B cell (primary cell): ENCODE measurements at regions of chr18 and their contacts with region 1.

Region 1: DNA sequence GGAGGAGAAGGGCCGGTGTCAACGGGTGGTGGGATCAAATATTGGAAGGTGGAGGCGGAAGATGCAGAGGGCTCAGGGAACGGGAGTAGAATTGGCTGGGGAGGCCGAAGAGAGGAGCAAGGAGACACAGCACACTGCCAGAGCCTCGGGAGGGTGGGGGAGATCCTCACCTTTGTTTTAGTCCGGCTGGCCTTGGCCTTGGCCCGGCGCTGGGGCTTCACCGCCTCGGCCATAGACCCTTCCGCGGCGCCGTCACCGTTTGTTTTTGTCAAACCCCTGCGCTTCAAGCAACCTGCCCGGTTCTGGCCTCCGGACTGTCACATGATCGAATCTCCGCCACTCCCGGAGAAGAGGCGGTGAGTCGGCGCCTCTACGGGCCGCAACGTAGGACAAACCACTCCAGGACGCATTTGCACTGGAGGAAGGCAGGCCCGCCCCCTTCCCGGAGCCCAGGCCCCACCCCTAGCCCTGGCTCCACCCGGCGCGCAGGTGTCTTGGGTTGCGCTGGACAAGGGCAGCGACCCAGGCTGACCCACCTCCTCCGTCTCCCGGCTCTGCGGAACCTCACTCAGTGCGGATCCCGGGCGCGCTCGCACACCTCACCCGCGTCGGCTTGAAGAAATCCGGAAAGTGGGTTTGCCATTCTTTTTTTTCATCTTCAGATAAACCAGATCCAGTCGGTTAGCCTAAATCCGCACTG is at the start of gene EPG5:
- DNase-seq: peak; percentile 94
- ATAC-seq: peak; percentile 99
- H3K4me3 ChIP-seq: peak within 1 kb of the TSS; percentile 76 to 90 (median 87)
- H3K4me3 Mint-ChIP-seq: peak within 1 kb of the TSS; percentile 99
- H3K27ac ChIP-seq: peak within 1 kb of the TSS; percentile 62 to 74
- H3K27ac Mint-ChIP-seq: peak within 1 kb of the TSS; percentile 94
- H3K4me1 ChIP-seq: peaks cover 0 to 9% of the 10 kb centered on the region in 2 donors
- H3K4me1 Mint-ChIP-seq: peaks cover 35% of the 10 kb centered on the region
- H3K27me3 ChIP-seq: no peaks in the 10 kb centered on the region
- H3K27me3 Mint-ChIP-seq: no peaks in the 10 kb centered on the region
- CTCF ChIP-seq: no peak
- total RNA-seq, gene EPG5: 46.8 and 50.4 TPM in 2 replicates

Region 2: DNA sequence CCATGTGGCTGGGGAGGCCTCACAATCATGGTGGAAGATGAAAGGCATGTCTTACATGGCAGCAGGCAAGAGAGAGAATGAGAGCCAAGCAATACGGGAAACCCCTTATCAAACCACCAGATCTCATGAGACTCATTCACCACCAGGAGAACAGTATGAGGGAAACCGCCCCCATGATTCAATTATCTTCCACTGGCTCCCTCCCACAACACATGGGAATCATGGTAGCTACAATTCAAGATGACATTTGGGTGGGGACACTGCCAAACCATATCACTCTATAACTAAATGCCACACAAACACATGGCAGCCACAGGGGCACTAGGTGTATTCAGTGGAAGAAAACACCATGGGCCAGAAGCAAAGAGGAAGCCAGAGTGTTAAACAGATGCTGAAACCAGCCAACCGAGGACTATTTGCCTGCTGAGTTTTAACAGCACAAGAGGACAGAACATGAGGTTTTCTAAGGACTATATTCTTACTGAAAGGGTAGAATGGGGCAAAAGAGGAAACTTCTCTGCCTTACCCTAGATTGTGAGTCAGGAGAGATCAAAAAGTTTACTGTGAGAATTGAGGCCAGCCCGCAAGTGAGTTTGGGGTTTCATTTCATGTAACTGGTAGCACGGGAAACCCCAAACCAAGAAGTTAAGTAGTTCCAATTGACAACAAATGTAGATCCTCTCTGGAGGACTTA is 92.5 kb before region 1 on chr18:
- CTCF ChIA-PET with region 1: no interaction called
- POLR2A ChIA-PET with region 1: no interaction called
- intact Hi-C with region 1: loop called (anchors 1 kb)
- DNase-seq: peak; percentile 73
- ATAC-seq: peak; percentile 91
- H3K4me3 ChIP-seq: peak overlapping the region in 1 of 5 experiments; percentile 25
- H3K4me3 Mint-ChIP-seq: peak overlapping the region; percentile 27
- H3K27ac ChIP-seq: peak overlapping the region; percentile 63 to 71
- H3K27ac Mint-ChIP-seq: peak overlapping the region; percentile 85
- H3K4me1 ChIP-seq: peaks cover 9 to 14% of the 10 kb centered on the region in 2 donors
- H3K4me1 Mint-ChIP-seq: peaks cover 18% of the 10 kb centered on the region
- H3K27me3 ChIP-seq: no peaks in the 10 kb centered on the region
- H3K27me3 Mint-ChIP-seq: no peaks in the 10 kb centered on the region
- CTCF ChIP-seq: no peak

Region 3: DNA sequence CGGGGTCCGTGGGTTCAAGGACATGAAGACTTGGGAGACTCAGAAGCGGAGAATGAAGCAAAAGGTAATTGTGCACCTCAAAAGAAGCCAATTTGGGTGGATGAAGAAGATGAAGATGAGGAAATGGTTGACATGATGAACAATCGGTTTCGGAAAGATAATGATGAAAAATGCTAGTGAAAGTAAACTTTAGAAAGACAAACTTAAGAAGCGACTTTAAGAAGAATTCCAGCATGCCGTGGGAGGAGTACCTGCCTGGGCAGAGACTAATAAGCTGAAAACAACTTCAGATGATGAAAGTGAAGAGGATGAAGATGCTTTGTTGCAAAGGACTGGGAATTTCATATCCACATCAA is 61.4 kb after region 1 on chr18:
- CTCF ChIA-PET with region 1: no interaction called
- POLR2A ChIA-PET with region 1: no interaction called
- intact Hi-C with region 1: loop called (anchors 1 kb)
- DNase-seq: no peak
- ATAC-seq: no peak
- H3K4me3 ChIP-seq: peak overlapping the region; percentile 38 to 72 (median 60)
- H3K4me3 Mint-ChIP-seq: peak overlapping the region; percentile 91
- H3K27ac ChIP-seq: no peak overlapping the region
- H3K27ac Mint-ChIP-seq: no peak overlapping the region
- H3K4me1 ChIP-seq: peaks cover 0 to 14% of the 10 kb centered on the region in 2 donors
- H3K4me1 Mint-ChIP-seq: peaks cover 6% of the 10 kb centered on the region
- H3K27me3 ChIP-seq: peaks cover 0 to 19% (median 6%) of the 10 kb centered on the region in 4 experiments
- H3K27me3 Mint-ChIP-seq: peaks cover 12% of the 10 kb centered on the region
- CTCF ChIP-seq: no peak

Region 4: DNA sequence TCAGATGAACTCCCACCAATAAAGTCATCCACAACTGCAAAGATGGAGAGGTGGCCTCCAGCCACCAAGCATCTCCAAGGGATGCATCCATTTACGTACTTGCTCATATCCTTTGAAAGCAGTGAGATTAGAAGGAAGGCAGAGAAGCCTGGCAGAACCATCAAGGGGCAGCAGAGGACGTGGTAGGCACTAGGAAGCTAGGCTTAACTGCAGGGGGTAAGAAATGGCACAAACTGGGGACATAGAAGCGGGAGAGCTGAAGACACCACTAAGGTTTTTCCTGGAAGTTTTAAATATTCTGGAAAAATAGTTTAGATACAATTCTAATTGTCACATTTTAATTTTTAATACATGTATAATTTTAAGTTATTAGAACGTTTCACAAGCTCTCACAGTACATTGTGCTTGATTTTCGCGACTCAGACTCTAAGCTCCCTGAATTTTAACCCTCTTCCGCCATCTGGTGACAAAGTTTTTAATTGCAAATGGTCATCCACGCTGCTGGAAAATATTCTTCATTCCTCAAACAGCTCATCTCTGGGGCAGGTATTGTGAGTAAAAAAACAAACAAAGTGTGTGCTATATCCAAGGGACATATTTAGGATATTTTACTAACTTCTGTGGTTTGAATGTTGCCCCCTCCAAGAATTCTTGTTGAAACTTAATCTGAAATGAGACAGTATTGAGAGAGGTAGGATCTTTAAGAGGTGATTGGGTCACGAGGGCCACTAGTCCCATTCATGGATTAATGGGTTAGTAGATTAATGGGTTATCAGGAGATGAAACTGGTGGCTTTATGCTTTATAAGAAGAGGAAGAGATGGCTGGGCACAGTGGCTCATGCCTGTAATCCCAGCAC is 106.5 kb after region 1 on chr18:
- CTCF ChIA-PET with region 1: no interaction called
- POLR2A ChIA-PET with region 1: no interaction called
- intact Hi-C with region 1: loop called (anchors 2 kb)
- DNase-seq: peak; percentile 69
- ATAC-seq: peak; percentile 54
- H3K4me3 ChIP-seq: no peak overlapping the region
- H3K4me3 Mint-ChIP-seq: no peak overlapping the region
- H3K27ac ChIP-seq: no peak overlapping the region
- H3K27ac Mint-ChIP-seq: no peak overlapping the region
- H3K4me1 ChIP-seq: peaks cover 17 to 26% of the 10 kb centered on the region in 2 donors
- H3K4me1 Mint-ChIP-seq: peaks cover 19% of the 10 kb centered on the region
- H3K27me3 ChIP-seq: peaks cover 0 to 34% (median 13%) of the 10 kb centered on the region in 4 experiments
- H3K27me3 Mint-ChIP-seq: peaks cover 6% of the 10 kb centered on the region
- CTCF ChIP-seq: peak; percentile 78

Region 5: DNA sequence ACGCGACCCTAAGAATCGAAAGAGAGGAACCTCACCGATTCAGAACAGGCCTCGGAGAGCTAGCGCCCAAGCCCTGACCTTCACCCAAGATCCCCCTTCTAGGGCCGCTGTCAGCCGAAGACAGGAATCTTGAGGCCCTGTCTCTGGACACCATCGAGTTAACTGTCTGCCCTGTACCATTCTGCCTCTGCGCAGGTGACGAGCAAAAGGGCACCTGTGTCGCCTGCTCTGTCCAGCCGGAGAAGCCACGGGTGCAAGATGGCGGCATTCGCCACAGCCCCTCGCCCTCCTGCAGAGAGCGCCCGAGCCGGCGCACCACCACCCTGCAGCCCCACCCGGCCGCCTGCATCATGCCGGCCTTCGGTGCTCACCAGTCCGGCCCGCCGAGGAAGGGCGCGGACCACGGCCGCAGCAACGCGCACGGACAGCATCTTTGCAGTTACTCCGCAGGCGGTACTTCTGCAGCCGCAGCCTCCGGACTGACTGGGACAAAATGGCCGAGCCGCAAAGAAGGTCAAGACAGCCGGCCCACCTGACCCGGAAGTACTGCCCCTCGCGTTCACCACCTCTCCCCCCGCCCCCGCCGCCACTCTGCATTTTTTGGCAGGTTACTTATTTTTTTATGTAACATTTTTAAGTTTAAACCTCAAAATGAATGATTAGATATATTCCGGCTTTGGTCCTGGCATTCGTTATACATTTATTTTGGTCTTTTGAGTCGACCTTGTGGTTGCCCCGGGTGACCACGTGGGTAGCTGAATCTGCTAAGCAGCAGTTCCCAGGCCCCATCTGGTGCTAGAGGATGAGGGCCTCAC is 130.9 kb after region 1 on chr18 and contains the start of gene ATP5F1A:
- CTCF ChIA-PET with region 1: no interaction called
- POLR2A ChIA-PET with region 1: no interaction called
- intact Hi-C with region 1: loop called (anchors 1 kb)
- DNase-seq: peak; percentile 94
- ATAC-seq: peak; percentile 88
- H3K4me3 ChIP-seq: peak within 1 kb of the TSS; percentile 66 to 80 (median 75)
- H3K4me3 Mint-ChIP-seq: peak within 1 kb of the TSS; percentile 99
- H3K27ac ChIP-seq: peak within 1 kb of the TSS; percentile 76 to 90
- H3K27ac Mint-ChIP-seq: peak within 1 kb of the TSS; percentile 97
- H3K4me1 ChIP-seq: peaks cover 25 to 26% of the 10 kb centered on the region in 2 donors
- H3K4me1 Mint-ChIP-seq: peaks cover 27% of the 10 kb centered on the region
- H3K27me3 ChIP-seq: no peaks in the 10 kb centered on the region
- H3K27me3 Mint-ChIP-seq: no peaks in the 10 kb centered on the region
- CTCF ChIP-seq: no peak
- total RNA-seq, gene ATP5F1A: 235 and 247 TPM in 2 replicates

Region 6: GRCh38 chr18:46104128-46104911 is 137.2 kb after region 1 on chr18 and contains the start of gene HAUS1:
- CTCF ChIA-PET with region 1: no interaction called
- POLR2A ChIA-PET with region 1: no interaction called
- intact Hi-C with region 1: loop called (anchors 1 kb)
- DNase-seq: peak; percentile 80
- ATAC-seq: peak; percentile 100
- H3K4me3 ChIP-seq: peak within 1 kb of the TSS; percentile 79 to 100 (median 90)
- H3K4me3 Mint-ChIP-seq: peak within 1 kb of the TSS; percentile 98
- H3K27ac ChIP-seq: peak within 1 kb of the TSS; percentile 56 to 64
- H3K27ac Mint-ChIP-seq: peak within 1 kb of the TSS; percentile 91
- H3K4me1 ChIP-seq: peaks cover 8 to 11% of the 10 kb centered on the region in 2 donors
- H3K4me1 Mint-ChIP-seq: peaks cover 18% of the 10 kb centered on the region
- H3K27me3 ChIP-seq: no peaks in the 10 kb centered on the region
- H3K27me3 Mint-ChIP-seq: no peaks in the 10 kb centered on the region
- CTCF ChIP-seq: no peak
- total RNA-seq, gene HAUS1: 28.4 and 30.9 TPM in 2 replicates

Region 7: DNA sequence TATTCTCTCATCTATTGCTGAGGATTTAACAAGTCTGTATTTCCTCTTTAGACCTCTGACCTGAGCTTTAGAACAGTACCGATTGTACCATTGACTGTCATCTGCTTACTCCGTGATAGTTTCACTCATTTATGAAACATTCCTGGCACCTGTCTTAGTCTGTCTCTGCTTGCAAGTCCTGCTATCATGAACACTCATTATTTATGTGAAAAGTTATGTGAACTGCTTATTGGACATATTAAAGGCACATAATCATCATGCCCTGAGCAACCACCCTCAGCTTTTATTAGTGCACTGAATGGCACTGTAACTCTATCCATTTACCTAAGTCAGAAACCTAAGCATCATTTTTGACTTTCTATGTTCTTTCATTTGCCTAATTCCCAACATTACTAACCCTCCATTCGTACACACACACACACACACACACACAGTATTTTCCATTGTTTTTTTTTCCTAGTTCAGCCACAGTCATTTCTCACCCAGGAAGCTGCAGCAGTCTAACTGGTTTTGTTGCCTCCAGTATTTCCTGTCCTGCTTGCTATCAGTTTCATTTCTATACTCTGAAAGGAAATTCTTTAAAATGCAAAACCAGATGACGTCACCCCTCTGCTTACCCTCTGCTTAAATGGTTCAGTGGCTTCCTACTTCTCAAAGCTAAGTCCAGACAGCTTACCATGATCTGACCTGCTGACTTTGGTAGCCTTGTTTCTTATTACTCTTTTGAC is 283.1 kb after region 1 on chr18:
- CTCF ChIA-PET with region 1: no interaction called
- POLR2A ChIA-PET with region 1: no interaction called
- intact Hi-C with region 1: loop called (anchors 1 kb)
- DNase-seq: peak; percentile 93
- ATAC-seq: peak; percentile 94
- H3K4me3 ChIP-seq: peak overlapping the region; percentile 19 to 53 (median 42)
- H3K4me3 Mint-ChIP-seq: peak overlapping the region; percentile 84
- H3K27ac ChIP-seq: peak overlapping the region; percentile 96 to 98
- H3K27ac Mint-ChIP-seq: peak overlapping the region; percentile 93
- H3K4me1 ChIP-seq: peaks cover 19 to 31% of the 10 kb centered on the region in 2 donors
- H3K4me1 Mint-ChIP-seq: peaks cover 36% of the 10 kb centered on the region
- H3K27me3 ChIP-seq: no peaks in the 10 kb centered on the region
- H3K27me3 Mint-ChIP-seq: no peaks in the 10 kb centered on the region
- CTCF ChIP-seq: no peak